HEK293T (cell line): ENCODE measurements at regions of chr17 and their contacts with region 1.

Region 1: DNA sequence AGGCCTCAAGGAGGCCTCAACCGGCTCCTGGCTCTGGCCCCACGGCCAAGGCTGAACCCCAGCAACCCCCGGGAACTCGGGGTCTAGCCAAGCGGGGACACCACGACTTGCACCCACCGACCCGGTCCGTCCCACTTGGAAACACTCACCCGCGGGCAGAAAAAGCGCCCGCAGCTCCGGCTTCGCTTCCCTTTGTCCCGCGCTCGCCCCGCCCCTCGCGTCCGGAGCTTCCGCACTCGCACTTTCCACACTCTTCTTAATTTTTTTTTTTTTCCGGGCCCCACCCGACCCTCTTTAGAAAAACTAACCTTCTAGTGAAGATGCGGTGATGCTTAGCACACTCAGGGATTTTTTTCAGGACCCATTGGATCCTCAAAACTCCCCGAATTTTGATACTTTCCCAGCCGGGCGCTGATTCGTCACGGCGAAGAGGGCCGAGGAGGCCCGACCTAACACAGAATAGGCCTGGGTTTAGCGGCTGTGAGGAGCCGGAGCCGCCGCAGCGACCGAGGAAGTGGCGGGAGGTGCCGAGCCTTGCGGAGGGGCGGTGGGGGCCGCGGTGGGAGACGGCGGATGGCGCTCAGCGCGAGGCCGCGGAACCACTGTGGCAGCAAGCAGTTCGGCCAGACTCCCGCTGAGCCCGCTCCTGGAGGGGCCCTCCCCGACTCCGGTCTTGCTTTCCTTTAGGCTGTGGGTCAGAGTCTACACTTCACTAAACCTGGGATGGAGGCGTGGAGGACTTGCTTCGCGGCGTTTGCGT is at the start of gene SMARCE1:
- DNase-seq: peak; percentile 56

Region 2: DNA sequence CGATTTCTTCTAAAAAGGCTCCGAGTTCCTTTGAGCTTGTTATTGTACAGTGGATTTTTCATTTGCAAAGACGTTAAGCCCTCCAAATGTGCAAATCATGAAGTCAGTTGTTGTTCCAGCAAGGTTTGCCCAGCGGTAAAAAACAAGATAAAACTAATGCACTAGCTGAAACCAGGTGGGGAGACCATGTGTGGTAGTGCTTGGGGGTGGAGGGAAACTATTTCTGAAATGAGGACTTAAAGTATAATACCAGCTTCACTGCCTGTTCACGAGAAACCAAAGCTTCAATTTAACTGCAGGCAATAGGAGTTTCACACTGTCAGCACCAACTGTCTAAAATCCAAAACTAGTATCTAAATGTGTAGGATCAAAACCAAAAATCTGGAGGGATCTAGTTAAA is 22.5 kb before region 1 on chr17:
- CTCF ChIA-PET with region 1: interaction called, 7 read pairs
- POLR2A ChIA-PET with region 1: interaction called, 12 read pairs
- DNase-seq: no peak

Region 3: DNA sequence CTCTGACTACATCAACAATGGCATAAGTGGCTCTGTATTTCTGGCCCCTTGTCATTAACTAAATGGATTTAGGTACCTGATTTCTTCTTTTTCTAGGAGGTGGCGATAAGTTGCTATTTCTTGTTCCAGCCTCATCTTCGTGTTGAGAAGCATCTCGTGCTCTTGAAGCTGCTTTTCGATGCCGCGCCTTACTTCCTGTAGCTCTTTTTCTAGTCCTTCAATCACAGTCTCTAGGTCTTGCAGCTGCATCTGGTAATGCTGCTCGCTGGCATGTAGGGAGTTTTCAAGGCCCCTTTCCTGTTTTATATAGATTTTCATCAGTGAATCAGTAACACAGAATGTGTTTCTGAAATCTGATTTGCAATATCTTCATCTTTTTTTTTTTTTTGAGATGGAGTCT is 12.1 kb after region 1 on chr17:
- CTCF ChIA-PET with region 1: no interaction called
- POLR2A ChIA-PET with region 1: interaction called, 14 read pairs
- DNase-seq: no peak